ENCODE measurements at regions of chr6 and their contacts with region 1.

Region 1: DNA sequence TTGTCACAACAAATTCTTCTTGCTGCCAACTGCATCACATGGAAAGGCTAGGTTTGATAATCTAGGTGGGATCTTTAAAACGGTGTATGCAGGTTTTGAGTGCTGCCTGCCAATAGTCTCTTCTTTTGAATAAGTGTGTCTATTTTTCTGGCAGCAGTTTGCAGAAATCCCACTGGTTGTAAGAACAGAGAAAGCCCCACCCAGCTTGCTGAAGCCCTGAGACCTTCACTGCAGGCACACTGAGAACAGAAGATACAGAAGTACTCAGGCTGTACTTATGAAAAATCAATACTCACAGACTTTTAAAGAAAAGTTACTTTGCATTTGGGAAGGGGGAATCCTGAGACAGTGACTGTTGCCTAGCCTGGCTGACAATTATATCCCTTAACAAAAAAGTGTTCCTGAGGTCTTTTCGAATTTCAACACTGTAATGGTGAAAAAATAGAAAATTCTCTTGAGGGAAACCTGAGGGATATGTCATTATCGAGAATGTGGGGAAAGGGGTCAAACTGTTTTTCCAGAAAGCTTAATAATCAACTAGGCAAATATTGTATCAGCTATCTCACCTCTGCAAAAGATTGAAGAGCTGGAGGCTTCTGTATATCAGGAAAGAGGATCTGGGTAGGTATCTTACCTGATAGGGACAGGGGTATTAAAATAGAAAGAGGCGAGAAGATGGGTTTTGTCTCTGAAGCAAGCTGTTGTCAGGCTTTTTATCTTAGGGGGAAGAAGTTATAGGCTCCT is 199.9 kb downstream of the LRFN2 start:
- DNase-seq: no peak
- H3K4me3 ChIP-seq: no peak overlapping the region
- CTCF ChIP-seq: no peak

Region 2: DNA sequence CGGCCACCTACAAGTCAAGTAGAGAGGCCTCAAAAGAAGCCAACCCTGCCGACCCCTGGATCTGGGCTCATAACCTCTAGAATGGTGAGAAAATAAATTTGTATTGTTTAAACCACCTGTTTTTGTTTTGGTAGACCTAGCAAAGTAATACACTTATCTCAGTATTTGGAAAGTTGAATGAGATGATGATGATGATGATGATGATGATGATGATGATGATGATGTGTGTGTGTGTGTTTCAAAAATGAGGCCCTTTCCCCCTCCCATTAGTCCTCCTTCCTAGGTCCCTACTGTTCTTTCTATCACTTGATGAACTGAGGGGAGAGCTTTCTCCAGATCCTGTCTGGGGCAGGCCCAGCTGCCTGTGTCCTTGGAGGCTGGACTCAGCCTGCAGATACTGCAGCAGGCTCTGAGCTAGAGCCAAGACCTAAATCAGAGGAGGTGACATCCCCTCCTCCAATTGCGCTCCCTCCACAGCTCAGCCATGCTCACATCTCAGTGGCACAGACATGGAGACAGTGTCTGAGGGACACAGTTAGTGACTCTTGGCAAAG is 79.8 kb after region 1 on chr6:
- in situ Hi-C with region 1: loop called (anchors 5 kb)
- DNase-seq: no peak
- H3K4me3 ChIP-seq: no peak overlapping the region
- CTCF ChIP-seq: no peak

Region 3: DNA sequence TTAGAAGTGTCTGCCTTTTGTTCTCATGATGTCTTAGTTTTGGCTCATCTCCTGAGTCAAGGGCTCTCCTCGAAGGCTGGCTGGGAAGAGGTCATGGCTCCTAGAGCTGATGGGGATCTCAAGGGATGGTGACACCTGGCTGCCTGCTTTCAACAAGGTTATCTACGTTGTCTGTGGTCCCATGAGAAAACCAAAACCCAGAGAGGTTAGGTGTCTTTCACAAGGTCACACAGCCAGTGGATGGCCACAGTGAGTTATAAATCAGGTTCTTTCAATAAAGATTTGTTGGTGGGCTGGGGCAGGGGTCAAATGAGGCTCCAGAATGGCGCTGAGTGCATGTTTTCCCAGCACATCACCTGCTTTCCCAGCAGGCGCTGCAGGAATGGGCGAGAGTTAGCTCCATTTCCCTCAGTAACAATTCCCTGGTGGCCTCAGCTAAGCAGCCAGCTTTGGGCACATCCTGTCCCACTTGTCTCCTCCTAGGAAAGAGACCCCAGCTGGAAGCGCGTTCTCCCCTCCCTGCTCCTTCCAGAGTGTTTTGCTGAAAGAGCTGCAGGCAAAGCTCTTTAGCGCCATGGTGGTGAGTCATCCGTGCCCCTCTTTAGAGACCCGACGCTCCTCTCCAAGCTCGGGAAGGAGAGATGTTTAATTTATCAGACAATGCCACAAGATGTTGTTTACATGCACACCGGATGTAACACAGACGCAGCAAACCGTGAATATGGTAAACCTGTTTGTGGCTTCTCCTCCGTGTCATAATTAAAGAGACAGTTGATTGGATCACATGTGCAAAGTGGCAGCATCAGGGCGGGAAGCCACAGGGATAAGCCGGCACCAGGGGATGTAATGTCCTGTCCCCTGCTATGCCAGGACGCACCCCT is 90.2 kb after region 1 on chr6:
- in situ Hi-C with region 1: no loop called
- DNase-seq: no peak
- H3K4me3 ChIP-seq: no peak overlapping the region
- CTCF ChIP-seq: no peak

Measured in astrocyte of the cerebellum (primary cell).